ENCODE measurements at regions of chr6 and their contacts with region 1.

Region 1: GRCh38 chr6:138692058-138692977 is 81.3 kb upstream of the CCDC28A start:
- DNase-seq: peak; percentile 82 to 92
- ATAC-seq: peak; percentile 87
- H3K4me3 ChIP-seq: peak overlapping the region; percentile 65 to 78
- H3K27ac ChIP-seq: no peak overlapping the region
- H3K4me1 ChIP-seq: no peaks in the 10 kb centered on the region
- H3K27me3 ChIP-seq: no peaks in the 10 kb centered on the region

Region 2: GRCh38 chr6:138588805-138589434 is 103.4 kb before region 1 on chr6:
- intact Hi-C with region 1: loop called (anchors 5 kb)
- DNase-seq: no peak
- ATAC-seq: peak; percentile 85
- H3K4me3 ChIP-seq: no peak overlapping the region
- H3K27ac ChIP-seq: no peak overlapping the region
- H3K4me1 ChIP-seq: no peaks in the 10 kb centered on the region
- H3K27me3 ChIP-seq: no peaks in the 10 kb centered on the region

Region 3: DNA sequence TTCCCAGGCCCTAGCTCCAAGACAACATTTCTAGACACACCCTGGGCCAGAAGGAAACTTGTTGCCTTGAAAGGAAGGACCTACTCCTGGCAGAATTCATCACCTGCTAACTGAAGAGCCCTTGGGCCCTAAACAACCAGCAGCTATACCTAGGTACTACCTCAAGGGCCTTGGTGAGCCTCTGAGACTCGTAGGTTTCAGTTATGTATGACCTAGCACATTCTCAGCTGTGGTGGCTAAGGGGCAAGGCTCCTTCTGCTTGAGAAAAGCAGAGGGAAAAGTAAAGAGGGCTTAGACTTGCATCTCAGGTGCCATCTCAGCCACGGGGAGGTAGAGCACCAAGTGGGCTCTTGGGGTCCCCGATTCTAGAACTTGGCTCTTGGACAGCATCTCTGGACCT is 60.8 kb before region 1 on chr6:
- intact Hi-C with region 1: no loop called
- DNase-seq: no peak
- ATAC-seq: no peak
- H3K4me3 ChIP-seq: no peak overlapping the region
- H3K27ac ChIP-seq: no peak overlapping the region
- H3K4me1 ChIP-seq: no peaks in the 10 kb centered on the region
- H3K27me3 ChIP-seq: no peaks in the 10 kb centered on the region

Region 4: DNA sequence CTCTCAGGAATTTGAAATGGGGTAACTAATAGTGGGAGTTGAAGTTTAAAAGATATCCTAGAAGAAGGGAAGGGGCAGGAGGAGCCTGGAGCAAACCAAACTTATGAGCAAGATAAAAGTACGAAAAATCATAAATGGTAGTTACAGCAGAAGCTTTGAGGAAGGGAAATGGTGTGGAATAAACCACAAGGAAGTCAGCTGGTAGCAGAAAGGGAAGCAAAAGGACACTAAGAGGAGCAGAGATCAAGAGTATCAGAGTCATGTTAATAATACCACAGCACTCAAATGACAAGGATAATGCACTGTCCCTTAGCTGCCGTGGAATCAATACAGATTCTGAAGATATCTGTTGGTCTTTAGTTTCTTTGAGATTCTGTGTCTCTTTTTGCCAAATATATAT is 36.3 kb after region 1 on chr6:
- intact Hi-C with region 1: no loop called
- DNase-seq: no peak
- ATAC-seq: no peak
- H3K4me3 ChIP-seq: no peak overlapping the region
- H3K27ac ChIP-seq: no peak overlapping the region
- H3K4me1 ChIP-seq: no peaks in the 10 kb centered on the region
- H3K27me3 ChIP-seq: peaks cover 0 to 2% of the 10 kb centered on the region in 2 donors

Region 5: DNA sequence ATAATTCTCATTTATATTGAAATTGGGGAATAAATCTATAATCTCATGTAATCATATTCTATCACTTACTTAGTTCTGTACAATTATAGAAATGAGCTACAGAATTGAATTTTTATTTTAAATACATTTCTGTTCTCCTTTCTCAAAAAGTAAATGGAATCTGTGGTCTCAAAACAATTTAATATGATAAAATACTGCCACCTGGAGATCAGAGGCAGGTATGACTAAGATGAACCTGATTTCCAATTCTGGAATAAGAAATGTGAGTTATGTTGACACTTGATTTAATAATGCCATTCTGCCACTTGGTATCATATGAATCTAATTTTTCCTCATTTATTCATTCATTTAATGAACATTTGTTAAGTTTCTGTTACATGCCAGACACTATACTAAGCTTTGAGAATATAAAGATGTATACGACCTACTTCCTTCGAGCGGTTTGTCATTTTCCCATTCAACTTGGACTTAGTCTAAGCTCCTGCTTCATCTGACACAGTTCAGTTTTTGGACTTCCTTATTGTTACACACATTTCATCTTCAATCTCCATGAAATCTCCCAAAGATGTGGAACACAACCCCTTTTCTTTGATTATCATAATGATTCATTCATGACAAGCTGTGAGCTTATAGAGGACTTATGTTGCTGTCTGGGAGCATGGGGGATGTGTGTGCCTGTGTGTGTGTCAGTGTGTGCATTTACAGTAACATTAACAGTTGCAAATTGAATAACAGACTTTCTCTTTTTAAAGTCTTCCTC is 73.8 kb after region 1 on chr6:
- intact Hi-C with region 1: loop called (anchors 5 kb)
- DNase-seq: no peak
- ATAC-seq: no peak
- H3K4me3 ChIP-seq: no peak overlapping the region
- H3K27ac ChIP-seq: no peak overlapping the region
- H3K4me1 ChIP-seq: no peaks in the 10 kb centered on the region
- H3K27me3 ChIP-seq: no peaks in the 10 kb centered on the region

Region 6: GRCh38 chr6:138773177-138774091 is 81.1 kb after region 1 on chr6 and contains the start of gene CCDC28A:
- intact Hi-C with region 1: loop called (anchors 5 kb)
- DNase-seq: peak; percentile 95 to 96
- ATAC-seq: peak; percentile 98
- H3K4me3 ChIP-seq: peak within 1 kb of the TSS; percentile 81 to 90
- H3K27ac ChIP-seq: peak within 1 kb of the TSS in 1 of 2 donors; percentile 89
- H3K4me1 ChIP-seq: no peaks in the 10 kb centered on the region
- H3K27me3 ChIP-seq: no peaks in the 10 kb centered on the region
- total RNA-seq, gene CCDC28A: 8.9 to 14.1 TPM

Measured in aorta (tissue), 5 donors.